ENCODE measurements at regions of chr4 and their contacts with region 1.

Region 1: DNA sequence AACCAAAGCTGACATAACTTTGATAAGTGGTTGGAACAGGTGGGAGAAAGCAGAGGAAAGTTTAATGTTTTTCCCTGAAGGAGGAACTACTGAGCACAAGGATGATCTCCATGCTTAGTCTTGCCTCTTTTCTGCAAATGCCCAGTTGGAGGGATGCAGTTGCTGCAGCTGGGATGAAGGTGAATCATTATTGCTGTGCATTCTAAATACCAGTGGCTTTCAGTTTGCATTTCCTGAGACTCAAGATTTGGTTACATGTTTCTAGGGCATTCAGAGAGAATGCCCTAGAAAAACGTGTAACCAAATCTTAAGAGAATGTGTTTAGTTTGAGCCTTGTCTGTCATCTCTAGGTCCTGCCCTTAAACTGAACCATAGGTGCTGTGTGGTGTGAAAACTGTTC is 42.2 kb downstream of the METTL14 start:
- DNase-seq: no peak
- H3K4me3 ChIP-seq: no peak overlapping the region
- H3K27ac ChIP-seq: no peak overlapping the region
- H3K4me1 ChIP-seq: no peaks in the 10 kb centered on the region
- H3K27me3 ChIP-seq: no peaks in the 10 kb centered on the region
- CTCF ChIP-seq: no peak
- POLR2A ChIP-seq: no peak

Region 2: DNA sequence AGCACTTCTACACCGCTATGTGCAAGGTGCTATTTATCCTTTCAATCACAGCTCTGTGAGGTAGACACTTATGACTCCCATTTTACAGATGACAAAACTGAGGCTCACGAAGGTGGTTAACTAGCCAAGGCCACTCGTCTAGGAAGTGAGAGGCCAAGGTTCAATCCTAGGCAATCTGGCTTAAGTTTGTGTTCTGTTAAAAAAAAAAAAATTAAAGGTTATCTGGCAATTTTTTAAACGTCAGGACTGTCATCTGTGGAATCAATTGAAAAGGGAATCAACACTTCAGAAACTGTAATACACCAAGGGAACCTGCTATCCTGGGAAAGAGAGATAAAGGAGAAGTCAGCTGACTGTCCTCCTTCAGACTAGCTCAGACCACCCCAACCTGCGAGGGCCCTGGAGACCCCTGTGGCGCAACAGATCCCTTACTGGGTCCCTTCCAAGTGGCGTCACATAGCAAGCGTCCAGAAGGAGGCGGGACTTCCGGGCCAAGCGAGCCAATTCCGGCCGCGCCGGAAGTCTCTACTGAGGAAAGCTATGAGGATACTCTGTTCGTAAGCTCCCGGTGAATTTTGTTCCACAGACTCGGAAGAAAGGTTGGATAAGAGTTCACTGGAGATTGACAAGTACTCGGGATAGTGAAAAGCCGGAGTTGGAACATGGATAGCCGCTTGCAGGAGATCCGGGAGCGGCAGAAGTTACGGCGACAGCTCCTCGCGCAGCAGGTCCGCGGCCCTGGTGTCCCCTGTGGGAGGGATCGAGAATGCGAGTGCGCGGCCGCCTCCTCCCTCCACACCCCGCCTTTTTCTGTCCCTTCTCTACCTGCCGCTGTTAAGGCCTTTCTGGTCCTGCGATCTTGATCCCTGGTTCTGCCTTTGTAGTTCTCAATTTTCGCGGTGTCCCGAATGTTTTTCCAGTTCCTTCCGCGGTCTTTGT is 42.2 kb before region 1 on chr4 and contains the start of gene METTL14:
- CTCF ChIA-PET with region 1: no interaction called
- POLR2A ChIA-PET with region 1: no interaction called
- dilution Hi-C with region 1: no loop called
- intact Hi-C with region 1: no loop called
- DNase-seq: peak; percentile 94
- H3K4me3 ChIP-seq: peak within 1 kb of the TSS; percentile 74 to 95 (median 82)
- H3K27ac ChIP-seq: peak within 1 kb of the TSS; percentile 44
- H3K4me1 ChIP-seq: peaks cover 11% of the 10 kb centered on the region
- H3K27me3 ChIP-seq: no peaks in the 10 kb centered on the region
- CTCF ChIP-seq: peak in 1 of 2 donors; percentile 2
- POLR2A ChIP-seq: peak; percentile 89
- total RNA-seq, gene METTL14: 38.6 and 42.9 TPM in 2 replicates

Region 3: GRCh38 chr4:118716304-118716703 is 11.1 kb before region 1 on chr4:
- CTCF ChIA-PET with region 1: interaction called, 11 read pairs
- POLR2A ChIA-PET with region 1: no interaction called
- dilution Hi-C with region 1: no loop called
- intact Hi-C with region 1: no loop called
- DNase-seq: no peak
- H3K4me3 ChIP-seq: no peak overlapping the region
- H3K27ac ChIP-seq: no peak overlapping the region
- H3K4me1 ChIP-seq: no peaks in the 10 kb centered on the region
- H3K27me3 ChIP-seq: no peaks in the 10 kb centered on the region
- CTCF ChIP-seq: no peak
- POLR2A ChIP-seq: no peak

Measured in endothelial cell of umbilical vein (primary cell).